GM10248 (cell line): ENCODE measurements at regions of chr16 and their contacts with region 1.

Region 1: DNA sequence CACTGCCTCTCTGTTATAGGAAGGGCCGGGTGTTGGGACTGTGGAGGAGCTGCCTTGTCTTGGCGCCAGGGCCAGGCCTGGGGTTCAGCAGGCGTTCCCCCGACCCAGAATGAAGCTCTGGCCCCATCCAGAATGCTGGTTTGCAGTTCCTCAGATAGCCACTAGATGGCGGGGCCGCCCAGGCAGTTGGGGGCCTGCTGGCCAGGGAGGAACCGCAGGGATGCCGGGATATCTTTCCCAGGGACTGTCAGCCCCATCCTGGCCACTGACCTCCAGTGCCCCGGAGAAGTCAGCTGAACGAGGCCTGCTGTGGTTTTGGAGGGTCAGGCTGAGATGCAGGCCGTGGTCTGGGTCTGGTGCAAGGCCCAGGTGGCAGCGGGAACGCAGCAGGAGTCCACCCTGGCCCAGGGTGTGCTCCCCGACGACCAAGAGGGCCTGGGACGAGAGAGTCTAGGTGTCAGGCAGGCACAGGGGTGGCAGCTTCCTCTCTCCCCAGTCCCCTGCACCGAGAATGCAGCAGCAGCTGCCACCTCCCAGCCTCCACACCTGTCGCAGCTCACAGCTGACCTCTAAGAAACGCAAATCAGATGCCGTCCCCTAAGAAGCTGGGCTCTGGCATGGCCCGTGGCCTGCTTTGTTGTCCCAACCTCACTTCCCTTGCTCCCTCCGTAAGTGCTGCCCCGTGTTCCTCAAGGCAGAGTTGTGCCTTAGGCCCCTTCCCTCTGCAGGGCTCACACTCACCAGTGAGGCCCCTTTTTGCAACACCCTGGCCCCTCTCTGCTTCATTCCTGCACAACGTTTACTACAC is 51.2 kb downstream of the RMI2 start:
- DNase-seq: peak; percentile 89
- CTCF ChIP-seq: peak; percentile 97

Region 2: DNA sequence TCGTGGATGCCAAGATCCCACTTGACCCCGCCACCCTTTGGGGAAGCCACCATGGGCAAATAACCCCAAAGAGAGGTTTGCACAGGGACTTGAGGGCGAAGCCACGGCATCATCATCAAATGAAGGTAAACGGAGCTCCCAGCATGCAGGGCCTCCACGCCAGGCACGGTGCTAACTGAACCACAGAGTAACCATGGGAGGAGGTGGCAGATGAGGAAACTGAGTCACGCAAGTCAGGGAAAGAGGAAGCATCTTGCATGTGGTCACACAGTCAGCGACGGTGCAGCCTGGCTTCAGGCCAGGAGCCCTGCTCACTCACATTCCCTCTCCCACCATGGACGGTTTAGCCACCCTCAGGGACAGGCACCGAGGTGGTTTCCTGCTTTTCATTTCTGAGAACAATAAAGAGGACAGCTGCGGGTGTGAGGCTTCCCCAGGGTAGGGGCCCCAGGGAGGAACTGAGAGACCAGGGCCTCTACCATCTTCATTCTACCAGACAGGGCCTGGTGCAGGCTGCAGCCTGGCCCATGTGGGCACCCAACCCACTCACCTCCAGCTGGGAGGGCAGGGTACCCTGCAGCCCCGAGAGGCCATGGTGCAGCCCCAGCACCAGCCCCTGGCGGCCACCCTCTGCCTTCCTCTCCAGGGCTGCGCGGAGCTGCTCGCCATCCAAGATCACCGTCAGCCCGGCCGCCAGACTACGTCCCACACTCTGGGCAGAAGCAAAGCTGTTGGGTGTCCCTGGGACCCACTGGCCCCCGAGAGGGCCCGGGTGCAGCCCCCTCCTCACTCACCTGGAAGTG is 27.1 kb after region 1 on chr16:
- CTCF ChIA-PET with region 1: interaction called, 17 read pairs
- POLR2A ChIA-PET with region 1: no interaction called
- DNase-seq: peak; percentile 58
- CTCF ChIP-seq: no peak

Region 3: GRCh38 chr16:11437069-11437468 is 40.6 kb after region 1 on chr16:
- CTCF ChIA-PET with region 1: interaction called, 11 read pairs
- POLR2A ChIA-PET with region 1: no interaction called
- DNase-seq: no peak
- CTCF ChIP-seq: no peak